ENCODE measurements at regions of chr17 and their contacts with region 1.

Region 1: GRCh38 chr17:75034236-75034908 is 12.4 kb downstream of the ATP5PD start:
- DNase-seq: peak; percentile 94
- ATAC-seq: peak; percentile 58
- H3K4me3 ChIP-seq: peak overlapping the region; percentile 76 to 93 (median 91)
- H3K27ac ChIP-seq: peak overlapping the region; percentile 94
- H3K4me1 ChIP-seq: peaks cover 37% of the 10 kb centered on the region
- H3K27me3 ChIP-seq: peaks cover 0 to 6% of the 10 kb centered on the region in 2 experiments; a peak in 3 of 5 replicates
- CTCF ChIP-seq: peak; percentile 48
- EP300 ChIP-seq: no peak
- POLR2A ChIP-seq: no peak
- RAD21 ChIP-seq: no peak

Region 2: GRCh38 chr17:74987418-74987908 is 46.9 kb before region 1 on chr17 and contains the start of gene CDR2L:
- CTCF ChIA-PET with region 1: no interaction called
- POLR2A ChIA-PET with region 1: interaction called, 9 read pairs
- in situ Hi-C with region 1: no loop called
- intact Hi-C with region 1: loop called (anchors 1 kb)
- DNase-seq: peak; percentile 86
- ATAC-seq: peak; percentile 91
- H3K4me3 ChIP-seq: peak within 1 kb of the TSS; percentile 63 to 82 (median 80)
- H3K27ac ChIP-seq: no peak within 1 kb of the TSS
- H3K4me1 ChIP-seq: peaks cover 54% of the 10 kb centered on the region
- H3K27me3 ChIP-seq: peaks cover 0 to 9% of the 10 kb centered on the region in 2 experiments; a peak in 2 of 5 replicates
- CTCF ChIP-seq: peak; percentile 37; the same call in 1 of the 2 replicates
- EP300 ChIP-seq: no peak
- POLR2A ChIP-seq: peak in 1 of 2 experiments; percentile 65; a peak in 2 of 4 replicates
- RAD21 ChIP-seq: peak; percentile 43
- total RNA-seq, gene CDR2L: 1.9 and 2.1 TPM in 2 replicates

Region 3: GRCh38 chr17:75077496-75078283 is 43.3 kb after region 1 on chr17:
- CTCF ChIA-PET with region 1: no interaction called
- POLR2A ChIA-PET with region 1: interaction called, 19 read pairs
- in situ Hi-C with region 1: no loop called
- intact Hi-C with region 1: no loop called
- DNase-seq: no peak
- ATAC-seq: no peak; the same call in 2 of the 3 replicates
- H3K4me3 ChIP-seq: peak overlapping the region; percentile 32 to 66 (median 46); a peak in 5 of 6 replicates
- H3K27ac ChIP-seq: no peak overlapping the region
- H3K4me1 ChIP-seq: peaks cover 92% of the 10 kb centered on the region
- H3K27me3 ChIP-seq: peaks cover 0 to 37% of the 10 kb centered on the region in 2 experiments; a peak in 3 of 5 replicates
- CTCF ChIP-seq: peak; percentile 28; the same call in 1 of the 2 replicates
- EP300 ChIP-seq: no peak
- POLR2A ChIP-seq: no peak
- RAD21 ChIP-seq: no peak

Region 4: DNA sequence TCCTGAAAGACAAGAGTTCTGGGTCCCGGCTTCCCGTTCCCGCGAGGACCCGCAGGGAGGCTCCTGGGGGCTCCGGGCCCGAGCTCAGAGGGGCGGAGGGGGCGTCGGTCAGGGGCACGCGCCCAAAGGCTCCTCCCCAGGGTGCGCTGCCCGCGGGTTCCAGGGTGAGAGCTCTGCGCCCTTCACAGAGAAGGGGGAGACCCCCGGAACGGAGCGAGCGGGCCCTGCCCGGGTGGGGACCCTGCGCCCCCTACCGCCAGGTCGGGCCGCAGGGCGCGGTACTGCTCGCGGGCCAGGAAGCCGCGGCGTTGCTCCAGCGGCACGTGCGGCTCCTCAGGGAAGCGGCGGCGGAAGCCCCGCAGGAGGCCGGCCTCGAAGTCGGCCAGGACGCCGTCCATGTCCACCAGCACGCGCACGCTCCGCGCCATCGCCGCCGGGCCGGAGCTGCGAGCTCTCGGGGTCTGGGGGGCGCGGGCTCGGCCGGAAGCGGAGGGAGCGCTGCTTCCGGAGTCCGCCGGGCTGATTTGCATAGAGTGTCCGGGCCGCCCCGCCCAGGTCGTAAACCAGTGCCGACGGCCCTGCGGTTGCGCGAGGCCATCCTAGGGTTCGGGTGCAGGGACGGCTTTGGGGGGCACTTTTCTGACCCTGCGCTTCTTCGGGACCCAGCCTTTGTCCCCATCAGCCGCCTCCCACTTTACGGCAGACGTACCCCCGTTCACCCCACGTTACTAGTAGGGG is 97.1 kb after region 1 on chr17 and contains the start of gene NT5C:
- CTCF ChIA-PET with region 1: no interaction called
- POLR2A ChIA-PET with region 1: interaction called, 14 read pairs
- in situ Hi-C with region 1: no loop called
- intact Hi-C with region 1: no loop called
- DNase-seq: peak; percentile 79
- ATAC-seq: peak; percentile 91
- H3K4me3 ChIP-seq: peak within 1 kb of the TSS; percentile 77 to 96 (median 83)
- H3K27ac ChIP-seq: peak within 1 kb of the TSS; percentile 86
- H3K4me1 ChIP-seq: peaks cover 26% of the 10 kb centered on the region
- H3K27me3 ChIP-seq: no peaks in the 10 kb centered on the region
- CTCF ChIP-seq: peak; percentile 87
- EP300 ChIP-seq: peak in 1 of 2 experiments; percentile 13; a peak in 1 of 4 replicates
- POLR2A ChIP-seq: peak; percentile 85 to 94
- RAD21 ChIP-seq: peak; percentile 91
- total RNA-seq, gene NT5C: 31.4 and 48.6 TPM in 2 replicates